ENCODE measurements at regions of chr2 and their contacts with region 1.

Region 1: GRCh38 chr2:145102706-145103105 is 582.8 kb upstream of the ZEB2 start:
- DNase-seq: no peak
- H3K4me3 ChIP-seq: no peak overlapping the region
- H3K27ac ChIP-seq: no peak overlapping the region
- H3K4me1 ChIP-seq: no peaks in the 10 kb centered on the region
- H3K27me3 ChIP-seq: no peaks in the 10 kb centered on the region
- CTCF ChIP-seq: no peak
- POLR2A ChIP-seq: no peak

Region 2: GRCh38 chr2:145146691-145147090 is 44.0 kb after region 1 on chr2:
- intact Hi-C with region 1: loop called (anchors 2 kb)
- DNase-seq: no peak
- H3K4me3 ChIP-seq: no peak overlapping the region
- H3K27ac ChIP-seq: no peak overlapping the region
- H3K4me1 ChIP-seq: no peaks in the 10 kb centered on the region
- H3K27me3 ChIP-seq: no peaks in the 10 kb centered on the region
- CTCF ChIP-seq: no peak
- POLR2A ChIP-seq: no peak